ENCODE measurements at regions of chr1 and their contacts with region 1.

Region 1: GRCh38 chr1:27102707-27103491 is 52.0 kb downstream of the SLC9A1 start:
- DNase-seq: peak; percentile 83 to 86
- ATAC-seq: peak; percentile 83 to 84 (median 83)
- H3K4me3 ChIP-seq: no peak overlapping the region
- H3K4me3 Mint-ChIP-seq: no peak overlapping the region
- H3K27ac ChIP-seq: no peak overlapping the region
- H3K27ac Mint-ChIP-seq: peak overlapping the region; percentile 41 to 72
- H3K4me1 ChIP-seq: peaks cover 37% of the 10 kb centered on the region
- H3K4me1 Mint-ChIP-seq: peaks cover 9 to 37% of the 10 kb centered on the region in 2 donors
- H3K27me3 ChIP-seq: no peaks in the 10 kb centered on the region
- H3K27me3 Mint-ChIP-seq: no peaks in the 10 kb centered on the region
- CTCF ChIP-seq: peak; percentile 91

Region 2: GRCh38 chr1:26991310-26992116 is 111.4 kb before region 1 on chr1:
- intact Hi-C with region 1: no loop called
- DNase-seq: peak in 1 of 2 donors; percentile 38
- ATAC-seq: peak in 1 of 3 donors; percentile 36
- H3K4me3 ChIP-seq: no peak overlapping the region
- H3K4me3 Mint-ChIP-seq: no peak overlapping the region
- H3K27ac ChIP-seq: no peak overlapping the region
- H3K27ac Mint-ChIP-seq: peak overlapping the region in 1 of 2 donors; percentile 61
- H3K4me1 ChIP-seq: peaks cover 23% of the 10 kb centered on the region
- H3K4me1 Mint-ChIP-seq: peaks cover 6 to 13% of the 10 kb centered on the region in 2 donors
- H3K27me3 ChIP-seq: peaks cover 23% of the 10 kb centered on the region
- H3K27me3 Mint-ChIP-seq: peaks cover 31 to 43% of the 10 kb centered on the region in 2 donors
- CTCF ChIP-seq: no peak

Region 3: DNA sequence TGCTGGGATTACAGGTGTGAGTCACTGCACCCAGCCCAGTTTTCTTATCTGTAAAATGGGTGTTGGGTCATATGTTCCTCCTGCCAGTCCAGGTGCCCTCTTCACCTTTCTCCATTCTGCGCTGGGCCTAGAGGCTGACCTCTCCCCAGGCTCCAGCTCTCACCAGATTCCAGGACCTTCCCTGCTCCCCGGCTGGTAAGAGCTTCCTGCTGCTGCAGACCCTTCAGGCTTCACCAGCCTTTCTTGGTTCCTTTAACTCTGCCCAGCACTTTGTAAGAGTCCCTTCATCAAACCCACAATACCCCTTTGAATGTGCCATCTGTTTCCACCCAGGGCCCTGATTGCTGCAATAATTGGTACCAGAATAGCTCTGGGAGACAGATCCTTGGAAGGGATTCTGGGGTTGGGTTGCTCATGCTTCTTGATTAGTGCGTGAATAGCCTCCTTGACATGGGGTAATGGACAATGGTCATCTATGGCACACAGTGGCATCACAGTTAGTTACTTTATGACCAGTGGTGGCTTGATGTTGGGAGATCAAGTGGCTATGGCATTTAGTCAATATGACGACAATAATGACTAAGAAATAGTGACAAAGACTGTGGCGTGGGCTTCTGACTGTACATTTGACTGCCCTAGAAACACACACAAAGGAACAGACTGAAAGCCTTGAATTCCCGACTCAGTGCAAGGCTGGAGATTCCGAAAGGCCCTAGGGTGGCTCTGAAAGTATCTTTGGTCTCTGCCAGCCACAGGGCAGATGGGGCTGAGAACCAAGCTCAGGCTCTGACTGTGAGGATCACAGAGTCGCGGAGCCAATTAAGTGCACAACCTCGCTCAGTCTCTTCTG is 15.3 kb before region 1 on chr1:
- intact Hi-C with region 1: no loop called
- DNase-seq: no peak
- ATAC-seq: no peak
- H3K4me3 ChIP-seq: no peak overlapping the region
- H3K4me3 Mint-ChIP-seq: no peak overlapping the region
- H3K27ac ChIP-seq: no peak overlapping the region
- H3K27ac Mint-ChIP-seq: peak overlapping the region in 1 of 2 donors; percentile 65
- H3K4me1 ChIP-seq: no peaks in the 10 kb centered on the region
- H3K4me1 Mint-ChIP-seq: peaks cover 0 to 9% of the 10 kb centered on the region in 2 donors
- H3K27me3 ChIP-seq: no peaks in the 10 kb centered on the region
- H3K27me3 Mint-ChIP-seq: no peaks in the 10 kb centered on the region
- CTCF ChIP-seq: no peak

Region 4: DNA sequence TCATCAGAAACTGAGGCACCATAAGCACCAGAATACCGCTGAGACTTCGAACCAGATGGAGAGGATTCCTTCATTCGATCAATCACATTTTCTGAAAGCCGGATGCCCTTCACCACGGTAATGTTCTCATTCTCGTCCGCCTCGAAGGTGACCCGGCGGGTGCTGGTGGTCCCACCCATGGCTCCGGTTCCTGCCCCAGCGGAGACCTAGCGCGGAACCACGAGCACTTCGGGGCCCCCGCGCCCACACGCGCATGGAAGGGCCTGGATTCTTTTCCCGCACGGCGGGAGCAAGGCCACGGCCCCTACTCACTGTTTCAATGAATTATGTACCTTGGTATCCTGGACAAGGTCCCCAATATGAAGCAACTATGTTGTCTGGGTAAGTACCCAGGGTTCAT is 98.4 kb after region 1 on chr1:
- intact Hi-C with region 1: loop called (anchors 1 kb)
- DNase-seq: no peak
- ATAC-seq: no peak
- H3K4me3 ChIP-seq: no peak overlapping the region
- H3K4me3 Mint-ChIP-seq: no peak overlapping the region
- H3K27ac ChIP-seq: no peak overlapping the region
- H3K27ac Mint-ChIP-seq: no peak overlapping the region
- H3K4me1 ChIP-seq: no peaks in the 10 kb centered on the region
- H3K4me1 Mint-ChIP-seq: peaks cover 6 to 7% of the 10 kb centered on the region in 2 donors
- H3K27me3 ChIP-seq: no peaks in the 10 kb centered on the region
- H3K27me3 Mint-ChIP-seq: no peaks in the 10 kb centered on the region
- CTCF ChIP-seq: no peak

Region 5: GRCh38 chr1:27284425-27285273 is 181.8 kb after region 1 on chr1:
- intact Hi-C with region 1: loop called (anchors 1 kb)
- DNase-seq: peak; percentile 80 to 93
- ATAC-seq: peak; percentile 93 to 99 (median 97)
- H3K4me3 ChIP-seq: no peak overlapping the region
- H3K4me3 Mint-ChIP-seq: no peak overlapping the region
- H3K27ac ChIP-seq: no peak overlapping the region
- H3K27ac Mint-ChIP-seq: peak overlapping the region in 1 of 2 donors; percentile 18
- H3K4me1 ChIP-seq: no peaks in the 10 kb centered on the region
- H3K4me1 Mint-ChIP-seq: peaks cover 0 to 4% of the 10 kb centered on the region in 2 donors
- H3K27me3 ChIP-seq: no peaks in the 10 kb centered on the region
- H3K27me3 Mint-ChIP-seq: no peaks in the 10 kb centered on the region
- CTCF ChIP-seq: peak; percentile 85

Region 6: GRCh38 chr1:27395441-27396195 is 292.7 kb after region 1 on chr1:
- intact Hi-C with region 1: loop called (anchors 5 kb)
- DNase-seq: peak; percentile 76 to 90
- ATAC-seq: peak; percentile 31 to 61 (median 32)
- H3K4me3 ChIP-seq: no peak overlapping the region
- H3K4me3 Mint-ChIP-seq: peak overlapping the region; percentile 17
- H3K27ac ChIP-seq: no peak overlapping the region
- H3K27ac Mint-ChIP-seq: peak overlapping the region; percentile 36 to 98
- H3K4me1 ChIP-seq: peaks cover 23% of the 10 kb centered on the region
- H3K4me1 Mint-ChIP-seq: peaks cover 11 to 24% of the 10 kb centered on the region in 2 donors
- H3K27me3 ChIP-seq: no peaks in the 10 kb centered on the region
- H3K27me3 Mint-ChIP-seq: peaks cover 6 to 7% of the 10 kb centered on the region in 2 donors
- CTCF ChIP-seq: peak; percentile 92